ENCODE measurements at regions of chr1 and their contacts with region 1.

Region 1: DNA sequence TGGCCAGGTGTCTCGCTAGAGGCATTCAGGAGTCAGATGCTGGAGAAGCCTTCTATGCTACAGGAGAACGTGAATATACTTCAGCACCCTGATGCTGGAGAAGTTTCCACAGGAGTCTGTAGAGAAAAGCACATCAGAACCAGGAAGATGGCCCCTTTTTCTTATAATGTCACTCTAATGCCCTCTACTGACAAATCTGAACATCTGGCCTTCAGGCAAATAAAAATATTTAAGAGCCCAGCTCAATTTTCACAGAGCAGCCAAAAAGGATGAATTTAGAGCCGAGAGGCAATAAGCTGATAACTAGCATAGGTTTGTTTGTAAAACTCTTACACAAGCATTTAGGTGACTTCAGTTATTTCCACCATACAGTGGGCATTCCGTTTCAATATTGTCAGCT is 3.8 kb upstream of the RRP15 start:
- DNase-seq: no peak
- H3K4me3 ChIP-seq: no peak overlapping the region
- H3K4me3 Mint-ChIP-seq: no peak overlapping the region
- H3K27ac Mint-ChIP-seq: no peak overlapping the region
- H3K4me1 ChIP-seq: peaks cover 5% of the 10 kb centered on the region; the same call in 1 of the 2 replicates
- H3K4me1 Mint-ChIP-seq: peaks cover 3% of the 10 kb centered on the region
- H3K27me3 ChIP-seq: no peaks in the 10 kb centered on the region
- H3K27me3 Mint-ChIP-seq: peaks cover 2% of the 10 kb centered on the region
- CTCF ChIP-seq: no peak

Region 2: GRCh38 chr1:218259800-218260199 is 21.5 kb before region 1 on chr1:
- CTCF ChIA-PET with region 1: interaction called, 18 read pairs
- POLR2A ChIA-PET with region 1: no interaction called
- intact Hi-C with region 1: loop called (anchors 1 kb)
- DNase-seq: peak in 1 of 2 experiments; percentile 55
- H3K4me3 ChIP-seq: no peak overlapping the region
- H3K4me3 Mint-ChIP-seq: no peak overlapping the region
- H3K27ac Mint-ChIP-seq: no peak overlapping the region
- H3K4me1 ChIP-seq: no peaks in the 10 kb centered on the region
- H3K4me1 Mint-ChIP-seq: peaks cover 9% of the 10 kb centered on the region
- H3K27me3 ChIP-seq: no peaks in the 10 kb centered on the region
- H3K27me3 Mint-ChIP-seq: peaks cover 5% of the 10 kb centered on the region
- CTCF ChIP-seq: peak; percentile 55 to 64

Region 3: GRCh38 chr1:218537122-218537904 is 256.0 kb after region 1 on chr1:
- CTCF ChIA-PET with region 1: no interaction called
- POLR2A ChIA-PET with region 1: no interaction called
- intact Hi-C with region 1: no loop called
- DNase-seq: no peak
- H3K4me3 ChIP-seq: no peak overlapping the region
- H3K4me3 Mint-ChIP-seq: no peak overlapping the region
- H3K27ac Mint-ChIP-seq: no peak overlapping the region
- H3K4me1 ChIP-seq: no peaks in the 10 kb centered on the region
- H3K4me1 Mint-ChIP-seq: no peaks in the 10 kb centered on the region
- H3K27me3 ChIP-seq: no peaks in the 10 kb centered on the region
- H3K27me3 Mint-ChIP-seq: no peaks in the 10 kb centered on the region
- CTCF ChIP-seq: no peak